Heart left ventricle (tissue), 16 donors: ENCODE measurements at regions of chr11 and their contacts with region 1.

Region 1: DNA sequence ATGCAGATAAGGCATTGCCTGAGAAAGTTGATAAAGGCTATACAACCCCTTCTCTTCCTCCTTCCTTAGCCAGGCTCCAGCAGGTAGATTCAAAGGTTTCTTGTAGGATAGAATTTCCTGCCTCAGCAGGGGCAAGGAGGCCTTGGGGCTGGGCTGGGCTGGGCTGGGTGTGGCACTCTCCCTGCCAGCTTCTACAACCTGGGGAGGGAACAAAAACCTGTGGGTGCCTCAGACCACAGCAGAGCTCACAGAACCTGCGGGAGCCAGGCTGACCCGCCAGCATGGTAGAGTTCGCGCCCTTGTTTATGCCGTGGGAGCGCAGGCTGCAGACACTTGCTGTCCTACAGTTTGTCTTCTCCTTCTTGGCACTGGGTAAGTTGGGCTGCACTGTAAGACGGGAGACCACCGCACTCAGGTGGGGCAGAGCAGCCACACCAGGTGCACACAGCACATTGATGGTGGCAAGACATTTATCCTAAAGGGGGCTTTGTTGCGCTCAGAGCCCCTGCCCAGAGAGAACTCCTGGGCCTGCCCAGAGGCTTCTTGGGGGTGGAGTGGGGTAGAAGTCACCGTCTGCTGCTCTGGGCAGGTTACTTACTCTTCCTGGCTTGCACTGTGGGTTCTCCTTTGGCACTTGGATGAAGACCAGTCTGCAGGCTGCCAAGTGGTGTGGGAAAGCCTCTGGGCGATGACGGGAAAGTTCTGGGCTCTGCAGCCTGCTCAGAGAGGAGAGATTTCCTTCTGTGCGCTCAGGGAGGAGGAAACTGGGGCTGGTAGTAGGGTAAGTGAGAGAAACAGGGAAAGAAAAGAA is at the start of gene MOGAT2:
- DNase-seq: peak in 3 of 5 donors; percentile 53 to 65 (median 55)
- ATAC-seq: peak; percentile 67 to 78 (median 70)
- H3K4me3 ChIP-seq: no peak within 1 kb of the TSS
- H3K27ac ChIP-seq: no peak within 1 kb of the TSS
- H3K4me1 ChIP-seq: peaks cover 0 to 13% (median 0%) of the 10 kb centered on the region in 12 donors
- H3K27me3 ChIP-seq: no peaks in the 10 kb centered on the region
- CTCF ChIP-seq: no peak
- POLR2A ChIP-seq: no peak
- total RNA-seq, gene MOGAT2: 0.20 to 0.27 (median 0.25) TPM in 3 of 9 donors, not detected in the others

Region 2: GRCh38 chr11:75691804-75692203 is 26.0 kb before region 1 on chr11:
- intact Hi-C with region 1: loop called in 1 of 10 experiments (anchors 2 kb)
- DNase-seq: no peak
- ATAC-seq: no peak
- H3K4me3 ChIP-seq: no peak overlapping the region
- H3K27ac ChIP-seq: no peak overlapping the region
- H3K4me1 ChIP-seq: peaks cover 0 to 9% (median 0%) of the 10 kb centered on the region in 12 donors
- H3K27me3 ChIP-seq: peaks cover 0 to 6% (median 0%) of the 10 kb centered on the region in 9 donors
- CTCF ChIP-seq: no peak
- POLR2A ChIP-seq: no peak

Region 3: DNA sequence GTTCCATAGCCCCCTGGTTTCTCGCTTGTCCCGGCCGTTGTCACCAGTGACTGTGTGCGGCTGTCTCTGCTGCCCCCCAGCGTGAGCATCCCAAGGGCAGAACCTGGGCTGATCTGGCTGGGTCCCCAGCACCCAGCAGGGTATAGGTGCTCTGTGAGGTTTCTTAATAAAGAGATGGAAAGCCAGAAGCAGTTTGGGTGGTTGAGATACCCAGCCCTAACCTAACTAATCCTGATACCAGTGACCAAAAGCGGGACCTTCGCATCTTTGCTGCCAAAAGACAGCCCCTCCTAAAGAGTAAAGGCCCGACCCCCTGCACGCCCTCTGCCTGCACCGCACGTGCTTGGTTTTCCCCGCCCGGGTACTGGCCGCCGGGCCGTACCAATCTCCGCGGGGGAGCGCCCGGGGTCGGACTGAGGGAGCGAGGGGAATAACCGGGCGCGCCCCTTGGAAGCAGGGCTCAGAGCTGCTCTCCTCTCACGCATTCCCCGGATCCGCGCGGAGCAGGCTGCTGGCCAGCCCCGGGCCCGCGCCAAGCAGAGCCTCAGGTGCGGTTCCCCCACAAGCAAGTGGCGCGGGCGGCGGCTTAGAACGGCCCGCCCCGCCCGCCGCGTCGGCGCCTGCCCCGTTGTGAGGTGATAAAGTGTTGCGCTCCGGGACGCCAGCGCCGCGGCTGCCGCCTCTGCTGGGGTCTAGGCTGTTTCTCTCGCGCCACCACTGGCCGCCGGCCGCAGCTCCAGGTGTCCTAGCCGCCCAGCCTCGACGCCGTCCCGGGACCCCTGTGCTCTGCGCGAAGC is 50.5 kb after region 1 on chr11 and contains the start of gene DGAT2:
- intact Hi-C with region 1: loop called in 6 of 10 experiments (anchors 2 to 10 kb)
- DNase-seq: peak; percentile 77 to 89 (median 83)
- ATAC-seq: peak; percentile 86 to 95 (median 90)
- H3K4me3 ChIP-seq: peak within 1 kb of the TSS; percentile 13 to 63 (median 57)
- H3K27ac ChIP-seq: peak within 1 kb of the TSS in 8 of 12 donors; percentile 15 to 73 (median 60)
- H3K4me1 ChIP-seq: peaks cover 0 to 44% (median 14%) of the 10 kb centered on the region in 12 donors
- H3K27me3 ChIP-seq: peaks cover 0 to 23% (median 7%) of the 10 kb centered on the region in 9 donors
- CTCF ChIP-seq: peak in 9 of 12 donors; percentile 19 to 47 (median 32)
- POLR2A ChIP-seq: peak in 1 of 2 donors; percentile 22
- total RNA-seq, gene DGAT2: 4.4 to 48.3 (median 8.3) TPM

Region 4: DNA sequence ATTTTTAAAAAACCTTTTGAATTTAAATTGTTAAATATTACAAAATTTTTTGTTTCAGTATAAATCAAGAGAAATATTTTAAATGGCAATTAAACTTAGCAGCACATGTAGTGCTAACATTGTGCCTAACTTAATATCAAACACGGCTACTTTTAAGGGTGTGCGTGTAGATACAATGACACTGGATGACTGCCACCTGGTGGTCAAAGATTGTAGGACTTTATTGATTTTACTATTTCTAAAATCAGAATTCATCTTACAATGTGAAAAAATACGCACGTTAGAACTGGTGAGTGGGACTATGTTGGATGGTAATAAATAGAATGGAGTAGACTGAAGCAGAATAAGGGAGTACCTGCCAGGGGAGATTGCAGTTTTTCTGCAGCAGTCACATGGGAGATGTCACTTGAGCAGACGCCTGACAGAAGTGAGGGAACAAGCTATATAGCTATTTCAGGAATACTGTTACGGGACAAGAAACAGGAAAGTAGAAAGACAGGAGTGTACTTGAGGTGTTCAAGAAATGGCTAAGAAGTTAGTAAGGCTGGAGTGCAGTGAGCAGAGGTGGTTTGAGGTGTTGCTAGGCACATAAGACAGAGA is 150.1 kb after region 1 on chr11:
- intact Hi-C with region 1: loop called in 8 of 10 experiments (anchors 5 to 10 kb)
- DNase-seq: peak in 2 of 5 donors; percentile 17 to 33
- ATAC-seq: peak; percentile 51 to 75 (median 70)
- H3K4me3 ChIP-seq: no peak overlapping the region
- H3K27ac ChIP-seq: no peak overlapping the region
- H3K4me1 ChIP-seq: peaks cover 0 to 36% (median 20%) of the 10 kb centered on the region in 12 donors
- H3K27me3 ChIP-seq: no peaks in the 10 kb centered on the region
- CTCF ChIP-seq: peak; percentile 73 to 89 (median 86)
- POLR2A ChIP-seq: no peak

Region 5: GRCh38 chr11:75873417-75874221 is 155.8 kb after region 1 on chr11:
- intact Hi-C with region 1: loop called in 8 of 10 experiments (anchors 5 to 10 kb)
- DNase-seq: no peak
- ATAC-seq: peak in 1 of 4 donors; percentile 32
- H3K4me3 ChIP-seq: no peak overlapping the region
- H3K27ac ChIP-seq: peak overlapping the region in 1 of 12 donors; percentile 6
- H3K4me1 ChIP-seq: peaks cover 0 to 38% (median 13%) of the 10 kb centered on the region in 12 donors
- H3K27me3 ChIP-seq: no peaks in the 10 kb centered on the region
- CTCF ChIP-seq: no peak
- POLR2A ChIP-seq: no peak

Region 6: DNA sequence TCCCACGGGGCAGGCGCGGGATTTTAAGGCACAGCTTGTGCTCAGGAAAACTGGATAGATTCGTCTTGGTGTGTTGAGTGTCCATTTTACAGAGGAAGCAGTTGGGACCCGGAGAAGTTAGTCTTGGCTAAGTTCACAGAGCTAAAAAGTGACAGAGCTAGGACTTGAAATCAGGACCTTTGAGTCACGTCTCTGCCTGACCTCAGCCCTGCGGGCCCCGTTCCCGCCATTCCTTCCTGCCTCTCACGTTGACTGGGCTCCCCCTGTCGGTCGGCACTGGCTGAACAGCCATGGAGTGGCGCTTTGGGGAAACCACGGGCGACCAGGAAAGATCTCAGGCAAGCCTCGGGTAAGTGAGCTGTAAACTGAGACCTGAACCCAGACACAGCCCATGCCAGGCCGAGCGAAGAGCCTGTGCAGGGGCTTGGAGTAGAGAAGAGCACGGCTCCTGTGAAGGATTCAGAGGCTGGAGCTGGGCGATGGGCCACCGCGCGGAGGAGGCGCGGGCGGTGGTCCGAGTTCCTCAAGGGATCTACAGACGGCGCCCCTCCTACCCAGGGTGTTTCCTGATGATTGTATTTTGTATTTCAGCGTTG is 434.4 kb after region 1 on chr11:
- intact Hi-C with region 1: loop called in 1 of 10 experiments (anchors 10 kb)
- DNase-seq: peak; percentile 86 to 95 (median 89)
- ATAC-seq: peak; percentile 80 to 92 (median 91)
- H3K4me3 ChIP-seq: peak overlapping the region in 11 of 12 donors; percentile 19 to 66 (median 48)
- H3K27ac ChIP-seq: peak overlapping the region in 4 of 12 donors; percentile 4 to 34 (median 20)
- H3K4me1 ChIP-seq: peaks cover 0 to 17% (median 12%) of the 10 kb centered on the region in 12 donors
- H3K27me3 ChIP-seq: no peaks in the 10 kb centered on the region
- CTCF ChIP-seq: peak; percentile 93 to 97 (median 96)
- POLR2A ChIP-seq: no peak

Region 7: GRCh38 chr11:76318744-76319384 is 601.1 kb after region 1 on chr11:
- intact Hi-C with region 1: loop called in 3 of 10 experiments (anchors 10 kb)
- DNase-seq: peak; percentile 77 to 89 (median 78)
- ATAC-seq: peak; percentile 83 to 93 (median 90)
- H3K4me3 ChIP-seq: no peak overlapping the region
- H3K27ac ChIP-seq: no peak overlapping the region
- H3K4me1 ChIP-seq: peaks cover 0 to 13% (median 2%) of the 10 kb centered on the region in 12 donors
- H3K27me3 ChIP-seq: peaks cover 0 to 24% (median 5%) of the 10 kb centered on the region in 9 donors
- CTCF ChIP-seq: peak; percentile 83 to 95 (median 92)
- POLR2A ChIP-seq: no peak